ENCODE measurements at regions of chr17 and their contacts with region 1.

Region 1: DNA sequence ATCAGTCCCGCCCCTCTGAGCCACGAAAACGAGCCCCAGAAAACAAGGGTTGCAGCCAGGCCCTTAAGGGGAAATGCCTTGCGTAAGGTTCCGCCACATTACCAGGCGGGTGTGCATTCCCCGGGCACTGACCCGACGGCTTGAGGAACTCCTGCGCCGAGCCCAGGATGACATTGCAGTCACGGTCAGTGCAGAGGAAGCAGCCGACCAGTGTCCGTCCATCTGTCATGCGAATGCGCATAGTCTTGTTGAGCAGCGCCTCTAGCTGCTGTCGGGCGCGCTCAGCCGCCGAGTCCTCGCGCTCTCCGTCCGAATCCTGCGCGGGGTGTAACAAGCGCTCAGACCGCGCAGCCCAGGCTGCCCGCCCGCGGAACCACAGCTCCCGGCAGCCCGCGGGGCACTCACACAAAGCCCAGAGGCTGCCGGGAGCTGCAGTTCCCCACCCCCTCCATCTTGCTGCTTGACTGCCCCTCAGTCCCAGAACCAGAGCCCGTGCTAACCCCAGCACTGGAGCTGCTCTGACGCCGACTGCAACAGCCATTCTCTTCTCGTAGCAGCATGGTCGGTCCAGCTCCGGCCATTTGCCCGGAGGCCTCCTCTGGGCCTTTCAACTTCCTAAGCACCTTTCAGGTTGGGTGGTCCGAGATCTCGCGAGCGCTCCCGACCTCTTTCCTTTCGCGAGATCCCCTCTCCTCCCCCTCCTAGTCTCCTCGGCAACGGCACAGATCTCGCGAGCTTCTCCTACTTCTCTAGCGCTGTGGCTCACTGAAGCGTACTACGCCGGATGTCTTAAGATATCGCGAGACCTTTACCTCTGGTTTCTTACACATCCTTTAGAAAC is at the start of gene NAA38:
- DNase-seq: peak; percentile 98
- H3K4me3 Mint-ChIP-seq: no peak within 1 kb of the TSS
- H3K27ac Mint-ChIP-seq: no peak within 1 kb of the TSS
- H3K4me1 Mint-ChIP-seq: peaks cover 22% of the 10 kb centered on the region
- H3K27me3 Mint-ChIP-seq: no peaks in the 10 kb centered on the region
- total RNA-seq, gene NAA38: 75.0 to 75.3 TPM

Region 2: GRCh38 chr17:7825206-7825990 is 31.7 kb before region 1 on chr17:
- CTCF ChIA-PET with region 1: interaction called, 11 read pairs
- intact Hi-C with region 1: loop called (anchors 1 kb)
- DNase-seq: no peak
- H3K4me3 Mint-ChIP-seq: no peak overlapping the region
- H3K27ac Mint-ChIP-seq: no peak overlapping the region
- H3K4me1 Mint-ChIP-seq: no peaks in the 10 kb centered on the region
- H3K27me3 Mint-ChIP-seq: no peaks in the 10 kb centered on the region

Region 3: DNA sequence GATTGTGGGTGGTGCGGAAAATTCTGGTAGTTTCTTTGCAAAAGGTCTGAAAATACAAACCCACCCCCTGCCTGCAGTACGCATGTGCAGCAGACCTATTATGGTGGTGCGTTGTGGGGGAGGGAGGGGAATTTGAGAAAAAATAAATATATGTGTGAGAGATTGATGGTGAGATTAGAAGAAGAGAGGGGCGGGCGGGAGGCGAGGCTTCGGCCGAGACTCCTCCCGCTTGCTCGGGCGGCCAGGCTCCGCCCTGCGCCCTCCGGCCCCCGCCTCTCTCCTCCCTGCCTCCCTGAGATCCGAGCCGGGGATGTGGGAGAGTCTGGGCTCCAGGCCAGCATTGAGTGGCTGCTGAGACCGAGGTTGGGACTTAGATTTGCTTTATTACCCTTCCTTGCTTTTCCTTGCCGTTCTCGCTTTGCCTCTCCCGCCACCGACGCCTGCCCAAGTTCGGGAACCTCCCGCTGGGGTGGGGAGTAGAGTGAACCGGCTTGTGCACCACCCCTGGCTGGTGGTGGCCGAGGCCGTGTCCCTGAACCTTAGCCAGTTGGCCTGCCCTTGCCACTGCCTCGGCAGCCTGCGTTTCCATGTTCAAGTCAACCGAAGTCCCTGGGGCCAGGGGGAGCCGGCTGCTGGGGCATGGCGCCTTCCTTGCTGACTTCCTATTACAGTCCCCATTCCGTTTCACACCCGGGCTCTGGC is 30.5 kb after region 1 on chr17:
- CTCF ChIA-PET with region 1: interaction called, 4 read pairs
- intact Hi-C with region 1: loop called (anchors 1 kb)
- DNase-seq: peak; percentile 96
- H3K4me3 Mint-ChIP-seq: no peak overlapping the region
- H3K27ac Mint-ChIP-seq: no peak overlapping the region
- H3K4me1 Mint-ChIP-seq: peaks cover 5% of the 10 kb centered on the region
- H3K27me3 Mint-ChIP-seq: no peaks in the 10 kb centered on the region

Region 4: GRCh38 chr17:7931709-7932482 is 74.8 kb after region 1 on chr17 and contains the starts of genes CNTROB and TRAPPC1:
- CTCF ChIA-PET with region 1: interaction called, 3 read pairs
- intact Hi-C with region 1: loop called (anchors 1 kb)
- DNase-seq: peak; percentile 100
- H3K4me3 Mint-ChIP-seq: peak within 1 kb of the TSS; percentile 91
- H3K27ac Mint-ChIP-seq: peak within 1 kb of the TSS; percentile 87
- H3K4me1 Mint-ChIP-seq: peaks cover 38% of the 10 kb centered on the region
- H3K27me3 Mint-ChIP-seq: no peaks in the 10 kb centered on the region
- total RNA-seq, gene CNTROB: 49.3 to 56.3 TPM
- total RNA-seq, gene TRAPPC1: 162 to 172 TPM